CD8-positive, alpha-beta T cell (primary cell): ENCODE measurements at regions of chr5 and their contacts with region 1.

Region 1: GRCh38 chr5:128579088-128579487 is 41.0 kb upstream of the FBN2 start:
- DNase-seq: no peak
- ATAC-seq: no peak
- H3K4me3 ChIP-seq: no peak overlapping the region
- H3K4me3 Mint-ChIP-seq: no peak overlapping the region
- H3K27ac ChIP-seq: no peak overlapping the region
- H3K27ac Mint-ChIP-seq: no peak overlapping the region
- H3K4me1 ChIP-seq: no peaks in the 10 kb centered on the region
- H3K4me1 Mint-ChIP-seq: no peaks in the 10 kb centered on the region
- H3K27me3 ChIP-seq: no peaks in the 10 kb centered on the region
- H3K27me3 Mint-ChIP-seq: no peaks in the 10 kb centered on the region
- CTCF ChIP-seq: no peak

Region 2: GRCh38 chr5:130350131-130350530 is 1771.0 kb after region 1 on chr5:
- CTCF ChIA-PET with region 1: no interaction called
- POLR2A ChIA-PET with region 1: no interaction called
- intact Hi-C with region 1: loop called in 1 of 2 experiments (anchors 5 kb)
- DNase-seq: no peak
- ATAC-seq: no peak
- H3K4me3 ChIP-seq: no peak overlapping the region
- H3K4me3 Mint-ChIP-seq: no peak overlapping the region
- H3K27ac ChIP-seq: no peak overlapping the region
- H3K27ac Mint-ChIP-seq: no peak overlapping the region
- H3K4me1 ChIP-seq: no peaks in the 10 kb centered on the region
- H3K4me1 Mint-ChIP-seq: no peaks in the 10 kb centered on the region
- H3K27me3 ChIP-seq: no peaks in the 10 kb centered on the region
- H3K27me3 Mint-ChIP-seq: no peaks in the 10 kb centered on the region
- CTCF ChIP-seq: no peak